Activated CD4-positive, alpha-beta T cell treated with anti-CD3 and anti-CD28 coated beads for 36 hours (primary cell): ENCODE measurements at regions of chr5 and their contacts with region 1.

Region 1: DNA sequence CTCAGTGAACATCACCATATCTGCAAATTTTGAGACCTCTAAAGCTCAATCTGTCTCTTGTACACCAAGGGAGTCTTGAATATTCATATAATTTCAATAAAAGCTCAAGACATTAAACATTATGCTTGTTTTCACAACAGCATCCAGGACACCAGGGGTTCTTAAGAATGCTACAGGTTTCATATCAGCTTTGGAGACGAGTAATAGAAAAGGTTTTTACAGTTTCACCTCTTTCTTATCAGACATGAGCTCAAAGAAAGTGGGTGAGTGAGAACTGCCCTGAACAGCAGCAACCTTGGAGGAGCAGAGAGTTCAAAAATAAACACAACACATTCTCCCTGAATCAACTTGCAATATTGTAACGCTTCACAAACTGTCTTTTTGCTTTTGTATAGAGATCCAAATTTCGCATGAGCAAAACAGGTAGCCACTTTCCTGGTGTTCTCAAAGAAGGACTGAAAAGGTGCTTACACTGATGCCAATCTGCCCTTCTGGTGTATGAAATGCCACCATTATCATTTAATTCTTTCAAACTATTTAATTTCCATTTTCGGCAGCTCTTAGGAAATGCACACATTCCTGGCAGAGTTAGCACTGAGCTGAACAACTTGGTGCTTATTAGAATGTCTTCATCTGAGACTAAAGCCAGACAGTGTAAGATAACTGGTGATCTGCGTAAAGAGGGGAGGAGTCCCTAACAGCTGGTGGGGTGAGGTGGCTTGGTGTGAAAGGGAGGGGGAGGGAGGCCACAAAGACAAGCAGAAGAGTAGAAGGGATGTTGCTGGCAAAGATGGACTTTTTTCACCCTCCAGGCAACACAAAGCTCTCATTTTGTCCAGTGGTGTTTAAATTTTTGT is 535.3 kb downstream of the PDE4D start:
- DNase-seq: no peak
- ATAC-seq: no peak
- H3K4me3 Mint-ChIP-seq: no peak overlapping the region
- H3K27ac Mint-ChIP-seq: no peak overlapping the region
- H3K4me1 Mint-ChIP-seq: no peaks in the 10 kb centered on the region
- H3K27me3 Mint-ChIP-seq: peaks cover 16% of the 10 kb centered on the region

Region 2: DNA sequence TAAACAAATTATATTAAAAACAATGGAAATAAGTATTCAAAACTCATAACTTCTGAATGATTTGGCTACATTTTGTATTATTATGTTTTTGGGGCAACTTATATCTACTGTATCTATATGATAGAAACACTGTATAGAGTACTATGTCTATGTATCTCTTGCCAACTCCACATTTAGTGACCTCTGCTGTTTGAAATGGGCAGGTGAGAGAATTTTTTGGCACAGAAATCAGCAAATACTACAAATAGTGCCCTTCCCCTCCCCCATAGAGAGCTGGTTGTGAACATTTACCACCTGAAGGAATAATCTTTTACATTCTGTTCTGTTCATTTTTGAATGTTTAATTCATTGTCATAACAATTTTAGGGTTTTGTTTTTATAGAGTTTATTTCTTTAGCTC is 10.0 kb before region 1 on chr5:
- CTCF ChIA-PET with region 1: interaction called, 6 read pairs
- POLR2A ChIA-PET with region 1: no interaction called
- intact Hi-C with region 1: loop called in 1 of 2 experiments (anchors 1 kb)
- DNase-seq: no peak
- ATAC-seq: no peak
- H3K4me3 Mint-ChIP-seq: no peak overlapping the region
- H3K27ac Mint-ChIP-seq: no peak overlapping the region
- H3K4me1 Mint-ChIP-seq: no peaks in the 10 kb centered on the region
- H3K27me3 Mint-ChIP-seq: peaks cover 5% of the 10 kb centered on the region